Calu3 (cell line): ENCODE measurements at regions of chr17 and their contacts with region 1.

Region 1: DNA sequence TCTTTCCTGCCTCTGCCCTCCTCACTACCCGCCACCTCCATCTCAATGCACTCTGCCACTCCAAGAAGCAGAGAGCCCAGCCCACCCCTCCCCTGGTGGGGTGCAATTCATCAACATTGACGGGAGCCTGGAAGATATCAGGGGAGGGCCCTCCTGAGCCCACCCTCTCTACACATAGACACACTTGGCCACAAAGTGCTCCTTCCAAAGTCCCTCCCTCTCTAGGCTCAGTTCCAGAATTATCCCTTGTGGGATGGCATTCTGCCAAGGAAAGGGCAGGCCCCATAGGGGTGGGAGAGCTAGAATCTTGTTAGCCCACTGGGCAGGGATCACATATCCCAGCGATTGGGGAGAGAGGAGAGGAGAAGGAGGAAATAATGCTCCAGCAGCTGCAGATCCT is 66.2 kb downstream of the TMEM132E start:
- DNase-seq: peak; percentile 47
- H3K4me3 Mint-ChIP-seq: no peak overlapping the region
- H3K27ac Mint-ChIP-seq: no peak overlapping the region
- H3K4me1 Mint-ChIP-seq: peaks cover 7% of the 10 kb centered on the region
- H3K27me3 Mint-ChIP-seq: peaks cover 43% of the 10 kb centered on the region
- CTCF ChIP-seq: no peak

Region 2: DNA sequence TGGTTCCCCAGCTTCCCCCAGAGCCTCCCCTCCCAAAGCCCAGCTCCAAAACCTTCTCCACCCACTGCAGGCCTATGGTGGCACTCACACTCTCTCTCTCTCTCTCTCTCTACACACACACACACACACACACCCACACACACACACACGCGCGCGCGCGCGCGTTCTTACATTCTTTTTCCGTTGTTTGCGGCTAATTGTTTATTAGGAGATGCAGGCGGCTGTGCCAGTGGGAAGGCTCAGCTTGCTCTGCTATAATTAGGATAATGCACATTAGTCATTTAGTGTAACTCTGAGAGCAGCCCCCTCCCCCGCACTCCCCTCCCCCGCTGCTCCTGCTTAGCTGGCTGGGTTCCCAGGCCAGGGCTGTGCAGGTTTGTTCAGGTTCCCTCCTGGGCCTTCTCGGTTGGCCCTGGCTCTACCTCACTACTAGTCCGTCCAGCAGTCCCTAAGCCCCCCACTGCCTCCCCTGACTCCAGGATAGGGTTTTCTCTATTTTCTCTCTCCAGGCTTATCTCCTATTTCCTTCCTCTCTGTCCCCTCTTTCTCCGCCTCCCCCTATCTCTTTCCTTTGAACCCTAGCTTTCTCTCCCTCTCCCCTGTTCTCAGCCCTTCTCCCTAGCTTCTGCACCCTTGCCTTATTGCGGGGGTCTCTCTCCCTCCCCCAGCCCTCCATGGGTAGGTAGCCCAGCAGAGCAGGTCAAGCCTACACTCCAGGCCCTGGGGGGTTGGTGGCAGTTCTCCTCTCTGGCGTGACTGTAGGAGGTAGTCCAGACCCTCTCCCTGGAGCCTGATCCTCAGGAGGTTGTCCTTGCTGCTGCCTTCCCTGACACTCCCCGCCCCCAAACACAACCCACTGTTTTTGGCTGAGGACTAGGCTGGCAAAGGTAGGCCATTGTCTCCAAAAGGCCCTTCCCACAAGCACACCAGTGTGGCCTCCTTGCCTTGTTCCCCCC is 32.3 kb before region 1 on chr17:
- CTCF ChIA-PET with region 1: interaction called, 10 read pairs
- intact Hi-C with region 1: no loop called
- DNase-seq: no peak
- H3K4me3 Mint-ChIP-seq: no peak overlapping the region
- H3K27ac Mint-ChIP-seq: no peak overlapping the region
- H3K4me1 Mint-ChIP-seq: peaks cover 17% of the 10 kb centered on the region
- H3K27me3 Mint-ChIP-seq: peaks cover 70% of the 10 kb centered on the region
- CTCF ChIP-seq: no peak